ENCODE measurements at regions of chr12 and their contacts with region 1.

Region 1: GRCh38 chr12:119544765-119545625 is 48.6 kb upstream of the TMEM233 start:
- DNase-seq: peak; percentile 74 to 85 (median 82)
- ATAC-seq: peak; percentile 92
- H3K4me3 ChIP-seq: no peak overlapping the region
- H3K27ac ChIP-seq: no peak overlapping the region
- H3K4me1 ChIP-seq: no peaks in the 10 kb centered on the region
- H3K27me3 ChIP-seq: no peaks in the 10 kb centered on the region
- CTCF ChIP-seq: peak; percentile 75 to 88 (median 84)
- EP300 ChIP-seq: no peak
- POLR2A ChIP-seq: no peak
- RAD21 ChIP-seq: peak; percentile 71 to 82

Region 2: GRCh38 chr12:119288576-119288975 is 256.4 kb before region 1 on chr12:
- CTCF ChIA-PET with region 1: no interaction called
- POLR2A ChIA-PET with region 1: no interaction called
- in situ Hi-C with region 1: no loop called
- intact Hi-C with region 1: no loop called
- DNase-seq: no peak
- ATAC-seq: no peak
- H3K4me3 ChIP-seq: no peak overlapping the region
- H3K27ac ChIP-seq: no peak overlapping the region
- H3K4me1 ChIP-seq: no peaks in the 10 kb centered on the region
- H3K27me3 ChIP-seq: peaks cover 6 to 13% of the 10 kb centered on the region in 2 experiments; a peak in 3 of 5 replicates
- CTCF ChIP-seq: no peak
- EP300 ChIP-seq: no peak
- POLR2A ChIP-seq: no peak
- RAD21 ChIP-seq: no peak

Region 3: GRCh38 chr12:119444456-119445044 is 100.4 kb before region 1 on chr12:
- CTCF ChIA-PET with region 1: interaction called, 12 read pairs
- POLR2A ChIA-PET with region 1: no interaction called
- in situ Hi-C with region 1: loop called (anchors 5 kb)
- intact Hi-C with region 1: loop called (anchors 1 kb)
- DNase-seq: peak; percentile 72 to 82 (median 80)
- ATAC-seq: peak; percentile 95
- H3K4me3 ChIP-seq: no peak overlapping the region
- H3K27ac ChIP-seq: no peak overlapping the region
- H3K4me1 ChIP-seq: no peaks in the 10 kb centered on the region
- H3K27me3 ChIP-seq: no peaks in the 10 kb centered on the region
- CTCF ChIP-seq: peak; percentile 99 to 100 (median 100)
- EP300 ChIP-seq: no peak
- POLR2A ChIP-seq: no peak
- RAD21 ChIP-seq: peak; percentile 64 to 79

Region 4: DNA sequence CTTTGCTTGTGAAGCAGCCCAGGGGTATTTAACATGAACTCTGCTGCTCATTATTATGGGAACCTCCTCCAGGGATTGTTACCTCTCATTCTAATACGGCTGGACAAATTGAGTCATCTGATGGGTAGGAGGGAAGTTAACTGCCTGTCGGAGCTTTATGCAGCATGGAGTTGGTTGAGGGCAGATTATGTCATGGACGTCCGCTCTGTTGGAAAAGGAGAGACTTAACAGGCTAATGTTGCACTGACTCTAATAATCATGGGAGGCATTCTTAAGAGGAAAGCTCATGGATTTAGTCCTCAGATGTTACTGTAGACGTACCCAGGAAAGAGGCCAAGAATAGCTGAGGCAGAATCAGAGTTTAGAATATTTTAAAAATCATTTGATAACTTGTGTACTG is 1026.3 kb after region 1 on chr12:
- CTCF ChIA-PET with region 1: no interaction called
- POLR2A ChIA-PET with region 1: no interaction called
- in situ Hi-C with region 1: no loop called
- intact Hi-C with region 1: no loop called
- DNase-seq: no peak
- ATAC-seq: no peak
- H3K4me3 ChIP-seq: no peak overlapping the region
- H3K27ac ChIP-seq: no peak overlapping the region
- H3K4me1 ChIP-seq: no peaks in the 10 kb centered on the region
- H3K27me3 ChIP-seq: no peaks in the 10 kb centered on the region
- CTCF ChIP-seq: no peak
- EP300 ChIP-seq: no peak
- POLR2A ChIP-seq: no peak
- RAD21 ChIP-seq: no peak